ENCODE measurements at regions of chr11 and their contacts with region 1.

Region 1: GRCh38 chr11:7442588-7443215 is 42.6 kb upstream of the OLFML1 start:
- DNase-seq: peak; percentile 89
- ATAC-seq: peak; percentile 93
- H3K4me3 Mint-ChIP-seq: no peak overlapping the region
- H3K27ac Mint-ChIP-seq: no peak overlapping the region
- H3K4me1 Mint-ChIP-seq: peaks cover 3% of the 10 kb centered on the region; the same call in 1 of the 2 replicates
- H3K27me3 Mint-ChIP-seq: peaks cover 3% of the 10 kb centered on the region; the same call in 1 of the 2 replicates
- CTCF ChIP-seq: peak; percentile 87

Region 2: DNA sequence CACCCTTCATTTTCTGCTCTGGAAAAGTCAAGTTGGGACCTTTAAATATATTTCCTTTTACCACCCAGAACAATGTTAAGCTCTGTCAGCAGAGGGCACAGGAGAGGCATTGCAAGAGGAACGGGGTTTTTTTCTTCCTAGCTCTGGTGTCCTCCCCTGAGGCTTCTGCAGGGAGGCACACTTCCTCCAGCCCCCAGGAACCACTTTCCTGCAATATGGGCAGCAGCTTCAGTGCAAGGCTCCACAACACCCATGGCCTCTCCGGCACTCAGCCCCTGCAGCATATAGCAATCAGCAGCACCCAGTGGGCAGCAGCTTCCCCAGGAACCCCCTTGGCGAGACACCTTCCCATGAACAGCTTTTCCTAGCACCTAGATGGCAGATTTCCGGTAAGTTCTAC is 89.6 kb before region 1 on chr11:
- CTCF ChIA-PET with region 1: interaction called, 85 read pairs
- POLR2A ChIA-PET with region 1: no interaction called
- DNase-seq: peak; percentile 41
- ATAC-seq: peak; percentile 96
- H3K4me3 Mint-ChIP-seq: no peak overlapping the region
- H3K27ac Mint-ChIP-seq: no peak overlapping the region
- H3K4me1 Mint-ChIP-seq: peaks cover 14% of the 10 kb centered on the region; the same call in 1 of the 2 replicates
- H3K27me3 Mint-ChIP-seq: no peaks in the 10 kb centered on the region; the same call in 1 of the 2 replicates
- CTCF ChIP-seq: 0 out of 2 replicates have a peak, but pooled peaks have one; percentile 37

Region 3: GRCh38 chr11:7520981-7521487 is 78.3 kb after region 1 on chr11:
- CTCF ChIA-PET with region 1: no interaction called
- POLR2A ChIA-PET with region 1: no interaction called
- DNase-seq: no peak
- ATAC-seq: no peak
- H3K4me3 Mint-ChIP-seq: no peak overlapping the region
- H3K27ac Mint-ChIP-seq: no peak overlapping the region
- H3K4me1 Mint-ChIP-seq: peaks cover 3% of the 10 kb centered on the region
- H3K27me3 Mint-ChIP-seq: peaks cover 5% of the 10 kb centered on the region
- CTCF ChIP-seq: no peak

Measured in WTC11 (cell line).